Mammary epithelial cell (primary cell): ENCODE measurements at regions of chr2 and their contacts with region 1.

Region 1: DNA sequence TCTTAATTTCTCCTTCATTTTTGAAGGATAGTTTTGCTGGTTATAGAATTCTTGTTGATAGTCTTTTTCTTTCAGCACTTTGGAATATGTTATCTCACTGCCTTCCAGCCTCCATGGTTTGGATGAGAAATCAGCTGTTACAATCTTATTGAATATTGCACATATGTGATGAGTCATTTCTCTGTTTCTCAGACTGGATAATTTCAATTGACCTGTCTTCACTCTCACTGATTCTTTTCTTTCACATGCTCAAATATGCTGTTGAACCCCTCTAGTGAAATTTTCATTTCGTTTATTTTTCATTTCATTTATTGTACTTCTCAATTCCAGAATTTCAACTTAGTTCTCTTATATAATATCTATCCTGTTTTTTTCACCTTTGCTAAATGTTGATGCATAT is 22.2 kb downstream of the PDK1 start:
- DNase-seq: peak; percentile 12
- H3K4me3 ChIP-seq: no peak overlapping the region
- H3K27ac ChIP-seq: no peak overlapping the region
- H3K4me1 ChIP-seq: no peaks in the 10 kb centered on the region
- H3K27me3 ChIP-seq: no peaks in the 10 kb centered on the region
- CTCF ChIP-seq: no peak

Region 2: DNA sequence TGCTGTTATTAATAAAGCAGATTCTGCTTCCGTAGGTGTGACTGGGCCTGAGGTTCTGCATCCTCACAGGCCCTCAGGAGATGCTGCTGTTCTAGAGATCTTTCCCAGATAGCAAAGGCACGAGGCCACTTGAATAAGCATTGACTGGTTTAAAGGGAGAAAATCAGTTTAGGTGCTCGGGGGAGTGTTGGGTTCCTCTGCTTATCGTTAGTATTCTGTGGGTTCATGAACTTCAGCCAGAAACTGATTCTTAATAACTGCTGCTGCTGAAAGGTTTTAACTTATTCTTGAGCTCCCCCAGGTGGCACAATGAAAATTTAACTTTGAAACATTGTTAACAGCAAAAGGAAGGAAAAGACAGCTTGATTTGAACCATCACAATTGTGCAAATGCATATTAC is 93.8 kb before region 1 on chr2:
- CTCF ChIA-PET with region 1: no interaction called
- dilution Hi-C with region 1: no loop called
- in situ Hi-C with region 1: no loop called
- intact Hi-C with region 1: no loop called
- DNase-seq: no peak
- H3K4me3 ChIP-seq: no peak overlapping the region
- H3K27ac ChIP-seq: no peak overlapping the region
- H3K4me1 ChIP-seq: no peaks in the 10 kb centered on the region
- H3K27me3 ChIP-seq: no peaks in the 10 kb centered on the region
- CTCF ChIP-seq: peak; percentile 6 to 16

Region 3: GRCh38 chr2:172623249-172623965 is 45.4 kb after region 1 on chr2:
- CTCF ChIA-PET with region 1: no interaction called
- dilution Hi-C with region 1: loop called (anchors 5 kb)
- in situ Hi-C with region 1: no loop called
- intact Hi-C with region 1: no loop called
- DNase-seq: no peak
- H3K4me3 ChIP-seq: no peak overlapping the region
- H3K27ac ChIP-seq: no peak overlapping the region
- H3K4me1 ChIP-seq: no peaks in the 10 kb centered on the region
- H3K27me3 ChIP-seq: no peaks in the 10 kb centered on the region
- CTCF ChIP-seq: no peak

Region 4: DNA sequence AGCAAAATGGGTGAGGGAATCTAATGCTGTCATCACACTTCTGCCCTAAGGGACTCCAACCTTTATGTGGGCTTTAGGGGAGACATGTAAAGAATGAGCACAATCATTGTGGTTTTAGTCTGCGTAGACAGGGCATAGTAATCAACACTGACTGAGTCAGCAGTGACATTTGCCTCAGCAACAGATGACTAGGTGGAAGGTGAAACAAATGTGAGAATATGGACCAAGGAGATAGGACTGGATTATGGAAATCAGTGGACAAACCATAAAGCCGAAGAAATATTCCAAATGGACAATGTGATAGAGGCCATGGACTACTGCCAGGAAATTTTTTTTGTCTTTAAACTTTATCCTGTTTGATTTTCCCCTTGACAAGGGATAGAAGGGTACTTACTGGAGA is 61.8 kb after region 1 on chr2:
- CTCF ChIA-PET with region 1: interaction called, 29 read pairs
- dilution Hi-C with region 1: no loop called
- in situ Hi-C with region 1: no loop called
- intact Hi-C with region 1: no loop called
- DNase-seq: peak; percentile 76
- H3K4me3 ChIP-seq: no peak overlapping the region
- H3K27ac ChIP-seq: peak overlapping the region; percentile 29
- H3K4me1 ChIP-seq: peaks cover 16% of the 10 kb centered on the region
- H3K27me3 ChIP-seq: no peaks in the 10 kb centered on the region
- CTCF ChIP-seq: no peak

Region 5: GRCh38 chr2:173059927-173060565 is 482.0 kb after region 1 on chr2:
- CTCF ChIA-PET with region 1: no interaction called
- dilution Hi-C with region 1: no loop called
- in situ Hi-C with region 1: no loop called
- intact Hi-C with region 1: no loop called
- DNase-seq: no peak
- H3K4me3 ChIP-seq: no peak overlapping the region
- H3K27ac ChIP-seq: peak overlapping the region; percentile 27
- H3K4me1 ChIP-seq: peaks cover 11% of the 10 kb centered on the region
- H3K27me3 ChIP-seq: no peaks in the 10 kb centered on the region
- CTCF ChIP-seq: no peak